ENCODE measurements at regions of chr12 and their contacts with region 1.

Region 1: GRCh38 chr12:52980693-52981423 is 25.4 kb upstream of the EIF4B start:
- DNase-seq: peak; percentile 94
- H3K4me3 ChIP-seq: no peak overlapping the region
- H3K27ac ChIP-seq: no peak overlapping the region
- H3K4me1 ChIP-seq: no peaks in the 10 kb centered on the region
- H3K27me3 ChIP-seq: no peaks in the 10 kb centered on the region
- CTCF ChIP-seq: peak; percentile 88 to 98 (median 94)
- POLR2A ChIP-seq: no peak

Region 2: DNA sequence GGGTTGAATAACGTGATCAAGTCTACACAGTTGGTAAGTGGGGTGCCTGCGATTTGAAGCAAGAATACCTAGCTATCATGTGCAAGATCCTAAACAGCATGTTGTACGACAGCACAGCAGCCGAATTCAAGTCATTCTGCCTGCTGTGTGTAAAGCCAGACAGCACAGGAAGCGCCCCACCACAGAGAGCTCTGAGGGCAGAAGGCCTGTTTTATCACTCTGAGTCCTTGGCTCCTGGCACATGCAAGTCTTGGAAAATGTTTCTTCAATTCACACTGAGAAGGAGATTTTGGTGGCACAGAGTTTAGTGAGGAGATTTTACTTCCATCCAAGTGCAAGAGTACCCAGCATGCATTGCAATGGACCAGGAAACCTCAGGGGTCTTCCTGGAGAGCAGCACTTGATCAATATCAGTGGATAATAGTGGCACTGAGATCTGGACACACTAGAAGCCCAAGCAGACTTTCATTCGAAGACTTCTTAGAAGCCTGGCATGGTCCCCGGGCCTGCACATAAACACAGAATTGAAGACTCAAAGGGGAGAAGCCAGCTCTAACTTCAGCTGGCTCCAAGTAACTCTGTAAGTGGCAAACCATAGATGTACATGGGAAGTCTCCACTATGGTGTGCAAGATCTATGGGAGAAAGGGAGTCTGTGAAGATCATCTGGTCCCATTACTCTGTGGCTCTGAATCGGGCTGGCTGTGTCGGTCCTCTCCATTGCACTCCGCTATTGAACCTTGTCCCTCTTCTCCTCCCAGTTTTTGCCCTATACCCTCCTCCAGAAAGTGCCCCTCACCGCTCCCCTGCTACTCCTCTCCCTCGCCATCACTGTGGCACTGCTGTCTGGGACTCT is 299.1 kb before region 1 on chr12:
- intact Hi-C with region 1: no loop called
- DNase-seq: no peak
- H3K4me3 ChIP-seq: no peak overlapping the region
- H3K27ac ChIP-seq: no peak overlapping the region
- H3K4me1 ChIP-seq: peaks cover 5% of the 10 kb centered on the region
- H3K27me3 ChIP-seq: no peaks in the 10 kb centered on the region
- CTCF ChIP-seq: no peak
- POLR2A ChIP-seq: no peak

Region 3: GRCh38 chr12:52884526-52885293 is 96.1 kb before region 1 on chr12:
- intact Hi-C with region 1: loop called (anchors 5 kb)
- DNase-seq: peak; percentile 87
- H3K4me3 ChIP-seq: no peak overlapping the region
- H3K27ac ChIP-seq: no peak overlapping the region
- H3K4me1 ChIP-seq: peaks cover 1% of the 10 kb centered on the region
- H3K27me3 ChIP-seq: no peaks in the 10 kb centered on the region
- CTCF ChIP-seq: peak; percentile 84 to 90 (median 85)
- POLR2A ChIP-seq: no peak

Region 4: GRCh38 chr12:53241623-53242412 is 261.0 kb after region 1 on chr12:
- intact Hi-C with region 1: no loop called
- DNase-seq: no peak
- H3K4me3 ChIP-seq: no peak overlapping the region
- H3K27ac ChIP-seq: no peak overlapping the region
- H3K4me1 ChIP-seq: no peaks in the 10 kb centered on the region
- H3K27me3 ChIP-seq: no peaks in the 10 kb centered on the region
- CTCF ChIP-seq: no peak
- POLR2A ChIP-seq: no peak

Region 5: DNA sequence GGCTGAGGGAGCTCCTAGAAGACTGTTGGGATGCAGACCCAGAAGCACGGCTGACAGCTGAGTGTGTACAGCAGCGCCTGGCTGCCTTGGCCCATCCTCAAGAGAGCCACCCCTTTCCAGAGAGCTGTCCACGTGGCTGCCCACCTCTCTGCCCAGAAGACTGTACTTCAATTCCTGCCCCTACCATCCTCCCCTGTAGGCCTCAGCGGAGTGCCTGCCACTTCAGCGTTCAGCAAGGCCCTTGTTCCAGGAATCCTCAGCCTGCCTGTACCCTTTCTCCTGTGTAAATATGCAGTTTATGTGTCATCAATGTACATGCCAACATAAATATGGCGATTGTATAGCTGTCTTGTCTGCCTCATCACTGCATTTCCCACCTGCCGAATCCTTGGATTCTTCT is 450.3 kb after region 1 on chr12:
- intact Hi-C with region 1: no loop called
- DNase-seq: no peak
- H3K4me3 ChIP-seq: no peak overlapping the region
- H3K27ac ChIP-seq: no peak overlapping the region
- H3K4me1 ChIP-seq: peaks cover 2% of the 10 kb centered on the region
- H3K27me3 ChIP-seq: no peaks in the 10 kb centered on the region
- CTCF ChIP-seq: no peak
- POLR2A ChIP-seq: no peak